ENCODE measurements at regions of chr6 and their contacts with region 1.

Region 1: DNA sequence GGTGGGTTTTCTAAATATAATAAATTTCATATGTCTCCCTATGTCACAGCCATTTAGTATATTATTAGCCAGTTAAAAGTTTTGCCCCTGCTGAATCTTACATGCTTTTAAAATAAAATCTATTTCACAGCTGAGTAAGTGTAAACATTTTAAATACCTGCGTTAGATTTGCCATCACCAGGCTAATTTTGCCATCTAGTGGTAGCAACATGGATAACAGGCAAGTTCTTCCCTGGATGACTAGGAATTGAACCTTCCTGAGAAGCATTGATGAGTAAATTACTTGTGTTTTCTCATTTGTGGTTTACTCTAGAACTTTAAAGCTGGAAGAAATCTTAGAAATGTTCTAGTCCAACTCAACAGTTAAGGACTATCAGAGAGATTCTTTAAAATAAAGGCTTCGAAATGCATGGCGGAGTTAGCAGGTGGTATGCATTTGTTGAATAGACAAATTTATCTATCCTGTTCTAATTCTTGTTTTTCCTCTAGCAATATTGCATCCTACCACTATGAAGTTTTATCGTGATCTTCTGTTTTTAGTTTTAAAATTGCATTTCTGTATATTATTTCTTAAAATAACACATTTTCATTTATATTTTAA is 2.6 kb downstream of the PRSS35 start:
- DNase-seq: no peak
- H3K4me3 Mint-ChIP-seq: no peak overlapping the region
- H3K27ac Mint-ChIP-seq: no peak overlapping the region
- H3K4me1 Mint-ChIP-seq: peaks cover 6% of the 10 kb centered on the region
- H3K27me3 Mint-ChIP-seq: peaks cover 39% of the 10 kb centered on the region

Region 2: DNA sequence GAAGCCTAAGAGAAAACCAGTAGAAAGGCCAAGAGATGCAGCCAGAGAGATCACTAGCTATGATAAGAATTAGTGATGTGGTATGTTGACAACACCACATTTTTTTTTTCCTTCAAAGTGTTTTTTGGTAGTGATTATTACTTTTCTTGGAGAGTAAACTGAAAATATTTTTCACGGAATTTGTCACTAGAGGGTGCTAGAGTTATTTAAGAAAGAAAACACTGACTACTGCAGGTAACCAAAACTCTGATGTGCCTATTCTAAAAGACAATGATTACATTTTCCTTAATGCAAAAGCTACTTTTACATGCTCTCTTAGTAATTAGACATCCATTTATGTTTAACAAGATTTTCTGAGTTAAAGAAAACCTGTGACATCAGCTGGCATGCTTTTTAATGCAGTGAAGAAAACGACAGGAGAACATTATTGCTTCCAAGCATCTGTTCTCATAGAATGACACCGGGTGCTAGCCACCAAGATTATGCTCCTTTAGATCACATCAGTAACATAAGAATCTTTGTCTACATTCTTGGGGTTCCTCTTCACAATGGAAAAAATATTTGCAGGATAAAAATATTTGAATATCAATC is 293.0 kb before region 1 on chr6:
- intact Hi-C with region 1: loop called (anchors 1 kb)
- DNase-seq: no peak
- H3K4me3 Mint-ChIP-seq: no peak overlapping the region
- H3K27ac Mint-ChIP-seq: no peak overlapping the region
- H3K4me1 Mint-ChIP-seq: no peaks in the 10 kb centered on the region
- H3K27me3 Mint-ChIP-seq: peaks cover 2% of the 10 kb centered on the region

Region 3: DNA sequence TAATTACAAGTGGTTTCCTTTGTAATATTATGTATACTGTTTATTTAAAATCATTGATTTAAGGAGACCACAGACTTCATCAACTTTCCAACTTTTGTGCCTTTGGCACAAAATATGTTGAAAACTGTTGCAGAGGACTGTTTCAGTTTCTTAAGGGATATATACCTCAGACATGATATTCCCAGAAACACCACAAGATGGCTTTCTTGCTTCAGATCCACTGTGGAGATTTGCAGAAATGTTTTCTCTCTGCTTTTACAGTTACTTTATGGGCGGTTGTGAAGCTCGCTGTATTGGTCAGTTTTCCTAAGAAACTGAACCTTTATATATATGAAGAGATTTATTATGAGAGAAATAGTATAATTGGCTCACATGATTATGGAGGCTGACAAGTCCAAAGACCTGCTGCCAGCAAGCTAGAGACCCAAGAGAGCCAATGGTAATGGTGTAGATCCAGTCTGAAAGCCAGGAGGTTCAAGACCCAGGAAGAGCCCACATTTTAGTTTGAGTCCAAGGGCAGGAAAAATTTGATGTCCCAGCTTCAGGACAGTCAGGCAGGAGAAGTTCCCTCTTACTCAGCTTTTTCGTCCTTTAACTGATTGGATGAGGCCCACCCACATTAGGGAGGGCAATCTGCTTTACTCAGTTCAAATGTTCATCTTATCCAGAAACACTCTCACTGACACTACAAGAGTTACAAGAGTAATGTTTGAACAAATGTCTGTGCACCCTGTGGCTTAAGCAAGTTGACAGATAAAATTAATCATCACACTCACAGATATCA is 96.9 kb before region 1 on chr6:
- intact Hi-C with region 1: loop called (anchors 5 kb)
- DNase-seq: no peak
- H3K4me3 Mint-ChIP-seq: no peak overlapping the region
- H3K27ac Mint-ChIP-seq: no peak overlapping the region
- H3K4me1 Mint-ChIP-seq: no peaks in the 10 kb centered on the region
- H3K27me3 Mint-ChIP-seq: no peaks in the 10 kb centered on the region